ENCODE measurements at regions of chr16 and their contacts with region 1.

Region 1: GRCh38 chr16:86563489-86564345 is 2.9 kb upstream of the FOXC2 start:
- DNase-seq: no peak
- H3K4me3 ChIP-seq: peak overlapping the region; percentile 57
- CTCF ChIP-seq: peak; percentile 86

Region 2: DNA sequence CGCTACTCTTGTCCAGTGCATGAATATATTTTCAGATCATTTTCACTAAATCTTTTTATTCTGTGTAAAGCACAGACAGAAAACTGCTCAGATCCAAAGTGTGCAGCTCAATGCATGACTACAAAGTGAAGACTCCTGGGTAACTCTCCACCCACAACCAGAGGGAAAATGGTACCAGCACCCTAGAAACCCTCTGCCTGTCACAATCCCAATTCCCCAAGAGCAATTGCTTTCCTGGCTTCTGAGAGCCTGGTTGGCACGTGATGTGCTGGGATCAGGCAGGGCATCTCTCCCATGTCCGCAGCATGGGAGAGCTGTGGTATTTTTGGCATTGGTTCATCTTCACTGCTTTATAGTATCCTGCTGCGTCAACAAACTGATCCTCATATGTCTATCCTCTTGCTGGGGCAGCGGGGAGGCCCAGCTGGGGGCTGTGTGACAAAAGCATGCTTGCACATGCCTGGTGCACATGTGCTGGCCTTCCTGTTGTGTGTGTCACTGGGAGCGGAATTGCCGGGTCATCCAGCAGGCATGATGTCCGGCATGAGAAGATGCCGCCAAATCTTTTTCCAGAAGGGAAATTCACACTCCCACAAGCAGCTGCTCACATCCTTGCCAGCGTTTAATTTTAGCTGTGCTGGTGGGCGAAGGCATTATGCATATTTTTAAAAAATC is 332.3 kb before region 1 on chr16:
- CTCF ChIA-PET with region 1: no interaction called
- POLR2A ChIA-PET with region 1: no interaction called
- DNase-seq: no peak
- H3K4me3 ChIP-seq: no peak overlapping the region
- CTCF ChIP-seq: no peak

Region 3: DNA sequence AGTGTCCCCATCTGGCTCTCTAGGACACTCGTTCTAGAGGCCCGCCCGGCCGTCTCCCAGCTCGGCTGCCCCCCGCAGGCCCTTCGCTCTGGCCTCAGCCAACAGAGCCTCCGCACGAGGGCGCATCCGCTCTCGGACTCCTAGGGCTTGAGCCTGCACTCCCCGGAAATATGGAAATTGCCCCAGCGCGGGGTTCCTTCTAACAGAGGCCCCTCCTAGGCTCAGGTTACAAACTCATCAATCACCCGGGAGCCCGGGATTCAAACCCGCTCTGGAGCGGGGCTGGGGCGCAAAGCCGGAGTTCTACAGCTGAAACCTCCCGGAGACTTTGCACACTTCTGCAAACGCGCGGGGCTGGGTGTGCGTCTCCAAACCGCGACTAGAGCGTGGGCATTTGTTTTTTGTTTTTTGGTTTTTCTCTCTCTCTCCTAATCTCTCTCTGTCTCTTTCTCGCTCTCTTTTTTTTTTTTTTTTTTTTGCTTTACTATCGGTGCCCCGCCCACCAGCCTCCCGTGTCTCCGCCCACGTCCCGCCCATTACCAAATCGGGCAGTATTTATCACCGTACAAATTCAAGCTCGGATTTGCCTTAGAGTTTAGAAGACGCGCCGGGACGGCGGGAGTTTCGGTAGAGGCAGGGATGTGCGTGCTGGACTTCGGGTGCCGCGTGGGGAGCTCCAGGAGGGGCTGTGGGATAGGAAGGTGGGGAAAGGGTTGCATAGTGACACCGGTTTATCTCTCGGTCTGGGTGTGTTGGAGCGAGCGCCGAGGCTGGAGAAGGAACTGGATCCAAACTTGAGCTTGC is 12.2 kb after region 1 on chr16:
- CTCF ChIA-PET with region 1: interaction called, 14 read pairs
- POLR2A ChIA-PET with region 1: interaction called, 9 read pairs
- DNase-seq: no peak
- H3K4me3 ChIP-seq: peak overlapping the region; percentile 73
- CTCF ChIP-seq: peak; percentile 82

Region 4: DNA sequence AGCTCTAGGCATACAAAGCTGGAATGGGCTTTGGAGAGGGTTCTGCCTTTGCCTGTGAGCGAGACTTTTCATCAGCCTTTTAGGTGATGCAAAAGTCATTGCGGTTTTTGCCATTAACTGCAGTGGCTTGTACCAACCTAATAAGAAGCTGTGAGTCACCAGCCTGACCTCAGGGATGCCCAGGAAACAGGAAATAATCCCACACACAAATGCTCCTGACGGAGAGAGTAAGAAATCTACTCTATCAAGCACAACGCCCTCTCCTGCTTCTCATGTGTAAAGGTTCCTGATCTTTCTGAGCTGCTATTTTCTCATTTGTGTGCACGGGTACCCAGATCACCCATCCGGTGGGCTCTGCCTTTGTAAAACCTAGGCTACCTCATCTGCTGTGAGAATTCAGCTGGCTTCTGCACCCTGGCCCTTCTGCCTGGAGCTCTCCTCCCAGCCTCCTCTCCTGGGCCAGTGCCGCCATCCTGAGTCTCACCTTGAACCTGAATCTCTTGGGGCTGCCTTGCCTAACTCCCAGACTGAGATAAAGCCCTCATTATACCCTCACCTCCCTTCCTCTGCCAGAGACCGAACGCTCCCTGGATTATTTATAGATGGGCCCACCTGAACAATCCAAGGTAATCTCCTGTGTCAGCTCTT is 453.8 kb after region 1 on chr16:
- CTCF ChIA-PET with region 1: interaction called, 36 read pairs
- POLR2A ChIA-PET with region 1: no interaction called
- DNase-seq: peak; percentile 71
- H3K4me3 ChIP-seq: no peak overlapping the region
- CTCF ChIP-seq: peak; percentile 63

Region 5: DNA sequence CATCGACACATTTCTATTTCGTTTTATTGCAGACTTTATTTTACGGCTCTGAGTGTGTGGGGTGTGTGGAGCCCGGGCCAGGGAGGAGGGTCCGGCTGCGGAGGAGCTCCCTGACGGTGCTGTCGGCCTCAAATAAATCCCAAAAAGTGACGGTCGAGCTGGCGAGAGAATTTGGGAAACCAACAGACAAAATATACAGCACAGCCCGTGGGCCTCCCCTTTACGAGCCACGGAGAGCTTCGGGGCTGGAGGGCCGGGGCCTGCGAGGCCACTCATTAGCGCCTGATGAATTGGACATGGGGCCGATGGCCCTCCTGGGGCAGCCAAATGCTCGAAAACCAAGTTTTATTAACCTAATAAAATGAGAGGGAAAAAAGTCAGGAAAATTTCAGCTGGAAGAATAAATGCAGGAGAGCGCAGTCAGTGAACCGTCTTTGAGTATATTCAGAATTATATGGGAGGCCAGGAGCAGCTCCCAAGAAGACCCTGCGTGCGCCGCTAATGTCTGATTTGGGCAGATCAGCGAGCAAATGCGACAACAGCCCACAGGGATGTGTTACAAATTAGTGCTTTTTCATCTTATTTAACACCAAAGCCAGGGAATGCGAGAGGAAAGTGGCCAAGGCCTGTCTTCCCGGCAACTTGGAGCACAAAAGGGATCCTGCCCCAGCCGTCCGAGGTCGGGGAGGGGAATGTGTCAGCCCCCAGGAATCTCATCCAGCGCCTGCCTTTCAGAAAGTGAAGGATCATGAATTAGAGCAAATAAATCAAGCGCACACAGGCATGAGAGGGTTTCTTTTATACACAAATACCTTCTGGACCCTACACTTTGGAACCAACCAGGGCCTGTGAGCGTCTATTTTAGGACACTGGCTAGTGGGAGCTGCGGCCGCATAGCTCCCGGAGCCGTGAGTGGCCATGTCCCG is 504.4 kb after region 1 on chr16:
- CTCF ChIA-PET with region 1: interaction called, 309 read pairs
- POLR2A ChIA-PET with region 1: interaction called, 5 read pairs
- DNase-seq: no peak
- H3K4me3 ChIP-seq: no peak overlapping the region
- CTCF ChIP-seq: no peak

Region 6: GRCh38 chr16:87233926-87234325 is 670.2 kb after region 1 on chr16:
- CTCF ChIA-PET with region 1: interaction called, 13 read pairs
- POLR2A ChIA-PET with region 1: no interaction called
- DNase-seq: no peak
- H3K4me3 ChIP-seq: no peak overlapping the region
- CTCF ChIP-seq: peak; percentile 57

Region 7: DNA sequence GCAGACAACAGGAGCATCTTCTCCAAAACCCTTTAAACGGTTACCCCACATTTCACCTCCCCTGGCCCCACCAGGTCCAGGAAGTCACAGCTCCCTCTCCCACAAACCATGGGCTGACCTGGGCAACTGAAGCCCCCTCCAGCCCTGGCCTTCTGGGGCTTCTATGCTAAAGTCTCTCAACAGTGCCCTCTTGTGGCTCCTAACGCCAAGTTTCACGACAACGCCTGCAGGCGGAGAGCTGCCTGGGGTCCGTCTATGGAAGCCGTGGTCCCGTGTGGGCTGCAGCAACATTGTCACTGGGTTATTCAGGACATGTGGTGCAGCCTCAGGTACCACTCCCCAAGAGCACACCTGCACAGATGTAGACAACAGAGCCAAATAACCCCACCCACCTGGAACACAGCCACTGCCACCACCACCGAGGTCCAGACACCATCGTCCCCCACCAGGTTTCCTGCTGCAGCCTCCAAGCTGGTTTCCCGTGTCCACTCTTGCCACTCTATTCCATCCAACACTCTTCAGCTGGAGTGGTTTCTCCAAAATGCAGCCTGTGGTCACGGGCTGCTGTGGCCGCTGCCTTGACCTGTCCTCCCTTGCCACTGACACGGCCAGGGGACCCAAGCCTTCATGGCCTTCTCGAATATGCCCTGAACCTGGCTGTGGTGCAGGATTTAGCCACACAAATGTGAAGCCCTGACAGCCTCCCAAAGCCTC is 734.4 kb after region 1 on chr16:
- CTCF ChIA-PET with region 1: interaction called, 43 read pairs
- POLR2A ChIA-PET with region 1: no interaction called
- DNase-seq: no peak
- H3K4me3 ChIP-seq: no peak overlapping the region
- CTCF ChIP-seq: peak; percentile 66

Region 8: GRCh38 chr16:87540945-87541877 is 977.5 kb after region 1 on chr16:
- CTCF ChIA-PET with region 1: no interaction called
- POLR2A ChIA-PET with region 1: no interaction called
- DNase-seq: peak; percentile 14
- H3K4me3 ChIP-seq: no peak overlapping the region; the same call in 1 of the 2 replicates
- CTCF ChIP-seq: no peak

Measured in AG04449 (cell line).